Activated CD8-positive, alpha-beta T cell treated with anti-CD3 and anti-CD28 coated beads, Interleukin-2, amount 10 ng/mL, durations not matched to agents 7 days and 5 days (primary cell): ENCODE measurements at regions of chr12 and their contacts with region 1.

Region 1: DNA sequence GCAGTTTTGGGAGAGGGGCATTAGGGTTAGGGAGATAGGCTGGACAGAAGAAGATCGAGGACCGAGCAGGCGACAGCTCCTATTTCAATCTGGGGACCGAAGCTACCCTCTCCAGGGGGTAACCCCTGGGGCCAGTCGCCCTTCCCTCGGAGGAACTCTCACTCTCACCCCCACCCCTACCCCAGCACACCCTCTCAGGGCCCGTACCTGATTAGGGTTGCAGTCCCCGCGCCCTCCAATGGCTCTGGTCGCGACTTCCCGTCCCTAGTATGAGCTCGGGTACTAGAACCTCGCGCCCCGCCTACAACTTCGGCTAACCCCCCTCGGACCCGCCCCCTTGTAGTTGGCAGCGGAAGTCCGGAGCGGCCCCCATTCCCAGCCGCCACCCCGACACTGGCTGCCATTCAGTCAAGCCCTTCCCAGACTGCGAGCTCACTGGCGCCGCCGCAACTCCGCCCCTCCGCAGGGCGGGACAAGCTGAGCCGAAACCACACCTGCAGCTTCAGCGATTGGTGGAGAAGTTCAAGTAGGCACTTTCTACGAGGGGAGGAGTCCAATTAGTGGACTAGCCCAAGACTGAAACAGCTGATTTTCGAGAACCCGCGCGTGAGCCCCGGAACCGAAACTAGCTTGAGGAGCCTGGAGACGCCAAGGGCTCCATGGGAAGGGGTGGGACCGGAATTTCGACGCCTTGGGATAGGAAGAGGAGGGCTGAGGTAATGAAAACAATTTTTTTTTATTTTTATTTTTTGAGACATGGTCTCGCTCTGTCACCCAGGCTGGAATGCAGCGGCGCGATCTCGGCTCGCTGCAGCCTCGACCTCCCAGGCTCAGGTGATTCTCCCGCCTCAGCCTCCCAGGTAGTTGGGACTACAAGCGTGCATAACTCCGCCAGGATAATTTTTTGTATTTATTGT is at the start of gene STAT2:
- DNase-seq: peak; percentile 100
- ATAC-seq: peak; percentile 98
- H3K4me3 Mint-ChIP-seq: peak within 1 kb of the TSS; percentile 93
- H3K27ac Mint-ChIP-seq: peak within 1 kb of the TSS; percentile 97
- H3K4me1 Mint-ChIP-seq: peaks cover 25% of the 10 kb centered on the region
- H3K27me3 Mint-ChIP-seq: no peaks in the 10 kb centered on the region
- total RNA-seq, gene STAT2: 193 to 194 TPM

Region 2: GRCh38 chr12:56315622-56316473 is 44.3 kb before region 1 on chr12 and contains the start of gene CNPY2:
- CTCF ChIA-PET with region 1: interaction called, 18 read pairs
- POLR2A ChIA-PET with region 1: interaction called, 30 read pairs
- DNase-seq: peak; percentile 98
- ATAC-seq: peak; percentile 96
- H3K4me3 Mint-ChIP-seq: peak within 1 kb of the TSS; percentile 99
- H3K27ac Mint-ChIP-seq: peak within 1 kb of the TSS; percentile 98
- H3K4me1 Mint-ChIP-seq: peaks cover 16% of the 10 kb centered on the region
- H3K27me3 Mint-ChIP-seq: no peaks in the 10 kb centered on the region
- total RNA-seq, gene CNPY2: 112 to 113 TPM

Region 3: GRCh38 chr12:56333679-56334489 is 26.2 kb before region 1 on chr12 and contains the start of gene PAN2:
- CTCF ChIA-PET with region 1: interaction called, 26 read pairs
- POLR2A ChIA-PET with region 1: interaction called, 60 read pairs
- DNase-seq: peak; percentile 97
- ATAC-seq: peak; percentile 94
- H3K4me3 Mint-ChIP-seq: peak within 1 kb of the TSS; percentile 96
- H3K27ac Mint-ChIP-seq: peak within 1 kb of the TSS; percentile 99
- H3K4me1 Mint-ChIP-seq: peaks cover 45% of the 10 kb centered on the region
- H3K27me3 Mint-ChIP-seq: no peaks in the 10 kb centered on the region
- total RNA-seq, gene PAN2: 61.8 to 63.7 TPM

Region 4: DNA sequence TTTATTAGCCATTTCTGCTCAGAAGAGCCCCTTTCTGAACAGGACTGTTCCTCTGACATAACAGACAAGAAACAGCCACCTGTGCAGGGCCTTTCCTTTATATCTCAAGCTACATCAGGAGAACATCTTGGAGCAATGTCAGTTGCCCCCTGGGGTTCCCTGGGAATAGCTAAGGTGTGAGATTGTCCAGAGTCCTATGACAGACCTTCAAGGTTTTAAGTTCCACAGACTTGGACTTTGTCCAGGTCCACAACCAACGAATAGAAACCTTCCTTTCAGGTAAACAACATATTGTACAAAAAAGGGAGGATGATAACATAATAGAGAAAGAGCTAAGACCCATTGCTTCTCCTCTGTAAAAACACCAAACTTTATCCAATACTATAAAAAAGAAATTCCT is 18.5 kb before region 1 on chr12:
- CTCF ChIA-PET with region 1: interaction called, 26 read pairs
- POLR2A ChIA-PET with region 1: interaction called, 60 read pairs
- DNase-seq: no peak
- ATAC-seq: no peak
- H3K4me3 Mint-ChIP-seq: no peak overlapping the region
- H3K27ac Mint-ChIP-seq: no peak overlapping the region
- H3K4me1 Mint-ChIP-seq: peaks cover 34% of the 10 kb centered on the region
- H3K27me3 Mint-ChIP-seq: no peaks in the 10 kb centered on the region

Region 5: DNA sequence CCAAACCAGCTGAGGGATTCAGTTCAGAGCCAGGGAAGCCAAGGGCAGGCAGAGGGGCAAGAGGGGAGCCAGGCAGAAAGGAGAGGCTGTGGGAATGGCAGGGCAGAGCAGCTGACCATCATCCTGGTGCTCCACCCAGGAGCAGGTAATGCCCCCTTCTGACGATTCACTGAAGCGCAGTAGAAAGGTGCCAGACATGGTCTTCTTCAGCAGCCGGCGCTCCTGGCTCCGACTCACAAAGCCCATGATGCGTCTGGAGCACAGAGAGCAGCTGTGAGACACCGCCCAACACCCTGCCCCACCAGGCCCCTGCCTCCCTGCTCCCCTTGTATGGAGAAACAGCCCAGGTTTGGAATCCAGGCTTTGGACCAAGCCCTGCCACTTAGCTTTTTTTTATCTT is 13.4 kb before region 1 on chr12:
- CTCF ChIA-PET with region 1: interaction called, 4 read pairs
- POLR2A ChIA-PET with region 1: interaction called, 53 read pairs
- DNase-seq: no peak
- ATAC-seq: peak; percentile 24
- H3K4me3 Mint-ChIP-seq: no peak overlapping the region
- H3K27ac Mint-ChIP-seq: peak overlapping the region; percentile 36
- H3K4me1 Mint-ChIP-seq: no peaks in the 10 kb centered on the region
- H3K27me3 Mint-ChIP-seq: no peaks in the 10 kb centered on the region

Region 6: GRCh38 chr12:56448860-56449621 is 88.9 kb after region 1 on chr12 and contains the start of gene TIMELESS:
- CTCF ChIA-PET with region 1: interaction called, 5 read pairs
- POLR2A ChIA-PET with region 1: interaction called, 27 read pairs
- DNase-seq: peak; percentile 89
- ATAC-seq: peak; percentile 99
- H3K4me3 Mint-ChIP-seq: peak within 1 kb of the TSS; percentile 91
- H3K27ac Mint-ChIP-seq: peak within 1 kb of the TSS; percentile 87
- H3K4me1 Mint-ChIP-seq: peaks cover 39% of the 10 kb centered on the region
- H3K27me3 Mint-ChIP-seq: peaks cover 2% of the 10 kb centered on the region
- total RNA-seq, gene TIMELESS: 62.7 to 65.7 TPM

Region 7: DNA sequence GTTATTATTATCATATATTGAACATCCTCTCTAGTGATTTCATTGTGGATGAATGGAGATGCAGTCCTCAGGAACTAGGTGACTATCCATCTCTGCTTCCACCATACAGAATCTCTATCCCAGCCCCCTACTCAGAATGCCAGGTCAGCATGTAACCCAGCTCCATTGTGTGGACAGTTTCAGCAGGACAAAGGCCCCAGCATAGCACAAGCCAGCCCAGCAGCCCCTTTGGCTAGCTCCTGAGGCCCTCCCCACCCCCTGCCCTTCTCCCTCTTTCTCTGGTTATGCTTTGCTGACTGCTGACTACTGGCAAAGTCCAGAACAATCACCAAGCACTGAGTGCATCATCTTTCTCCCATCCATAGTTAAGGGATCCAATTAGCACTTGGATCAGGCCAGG is 102.5 kb after region 1 on chr12:
- CTCF ChIA-PET with region 1: interaction called, 62 read pairs
- POLR2A ChIA-PET with region 1: interaction called, 6 read pairs
- DNase-seq: no peak
- ATAC-seq: no peak
- H3K4me3 Mint-ChIP-seq: no peak overlapping the region
- H3K27ac Mint-ChIP-seq: no peak overlapping the region
- H3K4me1 Mint-ChIP-seq: peaks cover 10% of the 10 kb centered on the region
- H3K27me3 Mint-ChIP-seq: no peaks in the 10 kb centered on the region